Calu3 (cell line): ENCODE measurements at regions of chr1 and their contacts with region 1.

Region 1: DNA sequence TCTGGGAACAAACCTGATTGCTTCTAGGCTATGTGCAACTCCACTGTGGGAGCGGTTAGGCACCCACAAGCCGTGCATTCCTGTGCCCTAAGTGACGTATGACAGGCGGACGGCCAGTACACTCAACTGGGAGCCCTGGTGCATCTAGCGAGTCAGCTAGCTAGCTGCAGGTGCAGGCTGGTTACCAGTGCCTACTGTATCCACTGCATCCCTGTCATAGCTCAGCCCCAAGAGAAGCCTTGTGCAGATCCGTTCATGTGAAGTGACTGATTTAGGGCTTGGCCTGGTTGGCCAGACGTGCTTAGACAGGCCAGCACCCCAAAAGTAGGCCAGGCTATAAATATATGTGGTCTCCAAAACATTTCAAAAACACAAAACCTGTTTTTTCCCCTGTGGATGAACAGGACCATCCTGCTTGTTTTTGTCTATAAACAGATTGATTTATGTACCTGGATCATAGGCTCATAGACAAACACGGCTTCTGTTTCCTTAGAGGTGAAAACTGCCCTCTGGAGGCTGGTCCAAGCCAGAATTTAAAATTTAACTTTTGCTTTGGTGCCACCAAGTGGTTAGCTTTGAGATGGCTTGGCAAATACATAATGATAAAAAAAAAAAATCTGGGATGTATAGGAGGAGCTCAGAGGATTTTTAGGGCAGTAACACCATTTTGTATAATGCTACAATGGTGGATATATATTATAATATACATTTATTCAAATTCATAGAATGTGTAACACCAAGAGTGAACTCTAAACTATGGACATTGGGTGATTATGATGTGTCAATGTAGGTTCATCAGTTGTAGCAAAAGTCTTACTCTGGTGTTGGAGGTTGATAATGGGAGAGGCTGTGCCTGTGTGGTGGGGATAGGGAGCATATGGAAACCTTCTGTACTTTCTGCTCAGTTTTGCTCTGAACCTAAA is 68.5 kb downstream of the GIPC2 start:
- DNase-seq: peak; percentile 64
- H3K4me3 Mint-ChIP-seq: no peak overlapping the region
- H3K27ac Mint-ChIP-seq: no peak overlapping the region
- H3K4me1 Mint-ChIP-seq: no peaks in the 10 kb centered on the region
- H3K27me3 Mint-ChIP-seq: no peaks in the 10 kb centered on the region
- CTCF ChIP-seq: peak; percentile 74

Region 2: DNA sequence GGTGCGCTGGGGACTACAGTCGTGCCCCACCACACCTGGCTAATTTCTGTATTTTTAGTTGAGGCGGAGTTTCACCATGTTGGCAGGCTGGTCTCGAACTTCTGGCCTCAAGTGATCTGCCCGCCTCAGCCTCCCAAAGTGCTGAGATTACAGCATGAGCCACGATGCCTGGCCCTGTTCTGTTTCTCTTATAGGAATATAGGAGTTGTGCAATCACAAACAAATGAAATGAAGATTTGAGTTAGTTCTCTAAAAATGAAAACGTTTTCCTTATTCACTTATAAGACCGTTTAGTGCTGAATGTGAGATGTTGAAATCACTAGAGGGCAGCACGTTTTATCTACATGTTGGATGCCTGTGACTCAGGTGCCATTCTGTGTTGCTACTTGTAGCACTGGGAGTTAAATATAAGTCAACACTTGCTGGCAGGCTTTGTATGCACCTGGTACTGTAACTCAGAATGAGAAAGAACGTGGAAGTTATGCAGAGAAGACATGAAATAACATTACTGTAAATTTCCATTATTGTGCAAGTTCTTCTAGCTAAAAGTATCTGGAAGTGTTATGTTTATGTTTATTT is 289.1 kb before region 1 on chr1:
- CTCF ChIA-PET with region 1: no interaction called
- intact Hi-C with region 1: loop called (anchors 2 kb)
- DNase-seq: peak; percentile 20
- H3K4me3 Mint-ChIP-seq: no peak overlapping the region
- H3K27ac Mint-ChIP-seq: no peak overlapping the region
- H3K4me1 Mint-ChIP-seq: peaks cover 5% of the 10 kb centered on the region
- H3K27me3 Mint-ChIP-seq: no peaks in the 10 kb centered on the region
- CTCF ChIP-seq: no peak

Region 3: DNA sequence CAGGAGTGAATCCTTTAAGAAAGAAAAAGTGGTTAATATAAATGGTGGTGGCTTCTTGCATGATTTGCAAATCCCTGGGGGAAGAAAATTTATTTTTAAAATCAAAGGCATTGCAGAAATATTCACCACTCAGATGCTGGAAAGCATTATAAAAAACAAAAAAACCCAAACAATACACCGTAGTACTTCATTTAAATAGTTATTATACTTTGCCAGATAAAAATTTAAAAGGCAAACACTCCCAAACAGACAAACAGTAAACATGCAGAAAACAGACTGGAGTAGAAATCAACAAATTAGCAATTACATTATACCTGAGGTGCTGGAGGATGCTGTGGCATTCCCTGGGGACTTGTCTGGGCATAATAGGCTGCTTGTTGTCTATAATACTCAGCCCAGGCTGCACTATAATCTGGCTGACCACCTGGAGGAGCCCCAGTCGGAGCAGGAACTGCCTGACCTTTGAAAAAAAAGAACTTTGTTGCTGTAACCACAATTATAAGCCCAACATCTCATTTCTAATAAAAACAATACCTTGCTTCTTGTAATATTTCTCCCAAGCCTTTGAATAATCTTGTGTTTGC is 165.4 kb before region 1 on chr1:
- CTCF ChIA-PET with region 1: no interaction called
- intact Hi-C with region 1: loop called (anchors 10 kb)
- DNase-seq: peak; percentile 23
- H3K4me3 Mint-ChIP-seq: no peak overlapping the region
- H3K27ac Mint-ChIP-seq: no peak overlapping the region
- H3K4me1 Mint-ChIP-seq: no peaks in the 10 kb centered on the region
- H3K27me3 Mint-ChIP-seq: no peaks in the 10 kb centered on the region
- CTCF ChIP-seq: no peak

Region 4: GRCh38 chr1:78004719-78005447 is 109.4 kb before region 1 on chr1 and contains the start of gene DNAJB4:
- CTCF ChIA-PET with region 1: interaction called, 5 read pairs
- intact Hi-C with region 1: loop called (anchors 1 kb)
- DNase-seq: peak; percentile 60
- H3K4me3 Mint-ChIP-seq: peak within 1 kb of the TSS; percentile 75
- H3K27ac Mint-ChIP-seq: peak within 1 kb of the TSS; percentile 69
- H3K4me1 Mint-ChIP-seq: peaks cover 8% of the 10 kb centered on the region
- H3K27me3 Mint-ChIP-seq: no peaks in the 10 kb centered on the region
- CTCF ChIP-seq: no peak
- total RNA-seq, gene DNAJB4: 15.0 and 23.0 TPM in 2 replicates

Region 5: GRCh38 chr1:78045926-78046778 is 68.1 kb before region 1 on chr1 and contains the start of gene GIPC2:
- CTCF ChIA-PET with region 1: no interaction called
- intact Hi-C with region 1: loop called (anchors 2 kb)
- DNase-seq: peak; percentile 36
- H3K4me3 Mint-ChIP-seq: peak within 1 kb of the TSS; percentile 77
- H3K27ac Mint-ChIP-seq: peak within 1 kb of the TSS; percentile 17
- H3K4me1 Mint-ChIP-seq: peaks cover 11% of the 10 kb centered on the region
- H3K27me3 Mint-ChIP-seq: peaks cover 33% of the 10 kb centered on the region
- CTCF ChIP-seq: no peak
- total RNA-seq, gene GIPC2: 2.1 and 2.8 TPM in 2 replicates

Region 6: DNA sequence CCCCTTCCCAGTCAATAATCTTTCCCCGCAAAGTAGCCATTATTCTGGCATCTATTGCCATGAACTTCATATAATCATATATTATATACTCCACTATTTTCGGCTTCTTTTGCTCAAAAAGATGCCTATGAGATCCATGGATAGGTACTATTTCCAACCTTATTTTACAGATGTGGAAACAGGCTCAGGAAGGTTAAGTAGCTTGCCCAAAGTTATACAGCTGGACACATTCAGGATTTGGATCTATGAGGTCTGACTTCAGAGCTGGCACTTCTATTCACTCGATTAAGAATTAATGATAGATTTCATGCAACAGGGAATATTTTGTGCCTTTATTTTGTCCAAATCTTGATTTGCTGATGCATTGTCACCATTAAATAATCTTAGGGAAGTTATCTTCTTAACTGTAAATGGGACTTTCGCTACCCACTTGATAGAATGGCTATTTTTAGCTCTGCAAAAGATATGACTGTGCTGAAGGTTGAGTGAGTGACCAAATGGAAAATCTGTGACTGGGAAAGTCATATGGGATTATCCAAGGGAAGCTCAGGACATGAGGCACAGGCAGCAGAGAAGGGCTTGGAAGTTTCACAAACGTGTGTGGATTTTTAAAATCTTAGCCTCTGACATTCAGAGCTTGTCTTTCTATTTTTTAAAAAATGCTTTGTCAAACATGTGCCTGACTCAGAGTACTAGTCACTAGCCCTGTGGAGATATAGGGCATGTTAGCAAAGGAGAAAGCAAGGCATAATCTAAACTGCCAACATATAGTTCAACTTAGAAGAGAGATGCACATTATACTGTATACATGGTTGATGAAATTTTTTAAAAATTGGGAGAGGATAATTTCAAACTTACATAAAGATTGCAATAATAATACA is 32.1 kb before region 1 on chr1:
- CTCF ChIA-PET with region 1: no interaction called
- intact Hi-C with region 1: no loop called
- DNase-seq: no peak
- H3K4me3 Mint-ChIP-seq: no peak overlapping the region
- H3K27ac Mint-ChIP-seq: no peak overlapping the region
- H3K4me1 Mint-ChIP-seq: peaks cover 10% of the 10 kb centered on the region
- H3K27me3 Mint-ChIP-seq: no peaks in the 10 kb centered on the region
- CTCF ChIP-seq: no peak